SK-N-SH (cell line): ENCODE measurements at regions of chr9 and their contacts with region 1.

Region 1: GRCh38 chr9:132575005-132575609 is 7.3 kb upstream of the BARHL1 start:
- DNase-seq: peak; percentile 93
- H3K4me3 ChIP-seq: no peak overlapping the region; a peak in 1 of 4 replicates
- H3K27ac ChIP-seq: no peak overlapping the region
- H3K4me1 ChIP-seq: no peaks in the 10 kb centered on the region; a peak in 1 of 4 replicates
- H3K27me3 ChIP-seq: peaks cover 33% of the 10 kb centered on the region
- CTCF ChIP-seq: peak; percentile 80
- EP300 ChIP-seq: no peak
- RAD21 ChIP-seq: peak; percentile 99

Region 2: DNA sequence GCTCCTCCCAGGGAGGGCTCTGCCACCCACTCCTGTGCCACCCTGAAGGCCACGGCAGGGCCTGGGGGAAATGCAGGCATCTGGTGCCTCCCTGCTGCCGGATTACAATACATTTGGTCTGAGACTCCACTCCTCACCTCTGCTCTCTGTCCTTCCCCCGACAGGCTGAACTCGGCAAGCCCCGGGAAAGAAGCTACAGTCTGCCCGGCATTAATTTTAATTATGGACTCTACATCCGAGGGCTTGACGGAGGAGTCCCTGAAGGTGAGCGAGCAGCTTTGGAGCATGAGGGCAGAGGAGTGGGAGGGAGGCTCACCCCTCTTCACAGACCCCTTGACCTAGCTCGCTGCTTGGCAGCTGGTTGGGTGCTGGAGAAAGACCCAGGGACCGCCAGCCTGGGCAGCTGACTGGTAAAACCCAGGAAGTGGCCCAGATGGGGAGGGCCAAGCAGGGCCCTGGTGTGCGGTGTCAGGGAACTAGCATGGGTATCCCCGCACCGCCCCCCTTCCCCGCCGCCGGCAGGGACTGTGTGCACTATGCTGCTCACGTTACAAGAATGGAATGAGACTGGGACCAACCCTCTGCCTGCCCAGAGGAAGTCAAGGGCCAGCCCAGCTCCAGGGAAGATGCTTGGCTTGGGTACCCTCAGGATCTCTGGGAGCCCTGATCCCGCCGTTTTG is 76.4 kb before region 1 on chr9:
- CTCF ChIA-PET with region 1: interaction called, 18 read pairs
- POLR2A ChIA-PET with region 1: no interaction called
- DNase-seq: peak; percentile 67
- H3K4me3 ChIP-seq: no peak overlapping the region
- H3K27ac ChIP-seq: peak overlapping the region in 1 of 2 experiments; percentile 36; a peak in 1 of 4 replicates
- H3K4me1 ChIP-seq: peaks cover 0 to 22% of the 10 kb centered on the region in 2 experiments; a peak in 1 of 4 replicates
- H3K27me3 ChIP-seq: no peaks in the 10 kb centered on the region
- CTCF ChIP-seq: no peak
- EP300 ChIP-seq: no peak
- RAD21 ChIP-seq: 0 out of 2 replicates have a peak, but pooled peaks have one; percentile 4

Region 3: GRCh38 chr9:132546148-132547051 is 28.7 kb before region 1 on chr9:
- CTCF ChIA-PET with region 1: interaction called, 42 read pairs
- POLR2A ChIA-PET with region 1: no interaction called
- DNase-seq: peak; percentile 96
- H3K4me3 ChIP-seq: peak overlapping the region; percentile 24 to 29; a peak in 3 of 4 replicates
- H3K27ac ChIP-seq: peak overlapping the region in 1 of 2 experiments; percentile 85; a peak in 2 of 4 replicates
- H3K4me1 ChIP-seq: peaks cover 0 to 49% of the 10 kb centered on the region in 2 experiments; a peak in 1 of 4 replicates
- H3K27me3 ChIP-seq: no peaks in the 10 kb centered on the region
- CTCF ChIP-seq: peak; percentile 51
- EP300 ChIP-seq: peak in 1 of 2 experiments; percentile 91; a peak in 2 of 4 replicates
- RAD21 ChIP-seq: no peak; the same call in 1 of the 2 replicates

Region 4: GRCh38 chr9:132551556-132551955 is 23.6 kb before region 1 on chr9:
- CTCF ChIA-PET with region 1: interaction called, 42 read pairs
- POLR2A ChIA-PET with region 1: no interaction called
- DNase-seq: no peak
- H3K4me3 ChIP-seq: no peak overlapping the region
- H3K27ac ChIP-seq: no peak overlapping the region
- H3K4me1 ChIP-seq: peaks cover 0 to 23% of the 10 kb centered on the region in 2 experiments; a peak in 1 of 4 replicates
- H3K27me3 ChIP-seq: no peaks in the 10 kb centered on the region; the same call in 1 of the 2 replicates
- CTCF ChIP-seq: no peak
- EP300 ChIP-seq: no peak
- RAD21 ChIP-seq: no peak

Region 5: GRCh38 chr9:132560616-132561202 is 14.4 kb before region 1 on chr9:
- CTCF ChIA-PET with region 1: interaction called, 25 read pairs
- POLR2A ChIA-PET with region 1: interaction called, 4 read pairs
- DNase-seq: peak; percentile 47
- H3K4me3 ChIP-seq: no peak overlapping the region
- H3K27ac ChIP-seq: peak overlapping the region in 1 of 2 experiments; percentile 34; a peak in 2 of 4 replicates
- H3K4me1 ChIP-seq: peaks cover 0 to 16% of the 10 kb centered on the region in 2 experiments; a peak in 1 of 4 replicates
- H3K27me3 ChIP-seq: no peaks in the 10 kb centered on the region; the same call in 1 of the 2 replicates
- CTCF ChIP-seq: no peak
- EP300 ChIP-seq: no peak
- RAD21 ChIP-seq: no peak

Region 6: DNA sequence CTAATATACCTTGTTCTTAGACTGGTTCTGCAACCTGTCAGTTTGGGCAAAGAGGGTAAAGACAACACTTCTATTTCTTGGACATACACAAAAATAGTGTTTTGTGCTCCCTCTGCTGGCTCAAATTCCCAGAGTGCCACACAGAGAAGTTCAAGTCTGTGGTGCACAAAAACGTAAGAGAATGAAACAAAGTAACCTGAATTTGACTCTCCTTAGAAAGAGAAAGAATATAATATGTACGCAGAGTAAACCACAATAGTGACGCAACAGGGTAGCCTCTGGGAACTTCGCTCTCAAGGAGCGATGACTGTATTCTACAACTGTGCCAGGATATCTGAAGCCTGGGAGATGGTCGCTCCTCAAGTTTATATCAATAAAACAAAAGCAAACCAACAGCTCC is 76.1 kb after region 1 on chr9:
- CTCF ChIA-PET with region 1: no interaction called
- POLR2A ChIA-PET with region 1: no interaction called
- DNase-seq: peak; percentile 19
- H3K4me3 ChIP-seq: no peak overlapping the region; a peak in 1 of 4 replicates
- H3K27ac ChIP-seq: peak overlapping the region in 1 of 2 experiments; percentile 16; a peak in 1 of 4 replicates
- H3K4me1 ChIP-seq: peaks cover 0 to 7% of the 10 kb centered on the region in 2 experiments; a peak in 3 of 4 replicates
- H3K27me3 ChIP-seq: no peaks in the 10 kb centered on the region
- CTCF ChIP-seq: peak; percentile 68
- EP300 ChIP-seq: no peak
- RAD21 ChIP-seq: peak; percentile 40; the same call in 1 of the 2 replicates